Heart left ventricle (tissue), 16 donors: ENCODE measurements at regions of chr1 and their contacts with region 1.

Region 1: GRCh38 chr1:180033390-180033789 is 78.8 kb downstream of the CEP350 start:
- DNase-seq: no peak
- ATAC-seq: no peak
- H3K4me3 ChIP-seq: no peak overlapping the region
- H3K27ac ChIP-seq: no peak overlapping the region
- H3K4me1 ChIP-seq: no peaks in the 10 kb centered on the region
- H3K27me3 ChIP-seq: no peaks in the 10 kb centered on the region
- CTCF ChIP-seq: no peak
- POLR2A ChIP-seq: no peak

Region 2: DNA sequence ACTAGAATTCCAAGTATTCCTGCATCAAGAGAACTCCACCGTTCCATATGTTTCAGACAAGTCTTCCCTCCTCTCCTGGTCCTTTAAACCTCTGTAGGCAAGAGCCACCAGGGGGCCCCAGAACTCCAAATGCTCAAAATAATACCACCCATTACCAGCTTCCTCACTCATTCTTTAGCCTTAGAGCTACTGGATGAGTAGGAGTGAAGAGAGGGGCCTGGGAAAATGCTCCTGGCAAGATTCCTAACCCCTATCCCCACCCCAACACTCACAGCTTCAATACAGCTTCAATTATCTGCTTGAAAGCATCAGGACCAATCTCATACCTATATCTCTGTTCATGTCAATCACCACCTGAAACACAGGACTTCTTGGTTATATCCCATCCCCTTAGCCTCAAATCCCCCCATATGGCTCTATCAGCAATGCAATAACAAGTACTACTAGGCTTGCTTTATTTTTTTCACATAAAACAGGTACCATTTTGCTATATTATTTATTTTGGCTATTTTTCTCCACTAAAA is 165.5 kb before region 1 on chr1:
- intact Hi-C with region 1: loop called in 1 of 10 experiments (anchors 10 kb)
- DNase-seq: peak in 1 of 5 donors; percentile 47
- ATAC-seq: peak in 3 of 4 donors; percentile 45 to 63 (median 55)
- H3K4me3 ChIP-seq: no peak overlapping the region
- H3K27ac ChIP-seq: no peak overlapping the region
- H3K4me1 ChIP-seq: peaks cover 0 to 38% (median 22%) of the 10 kb centered on the region in 12 donors
- H3K27me3 ChIP-seq: no peaks in the 10 kb centered on the region
- CTCF ChIP-seq: peak; percentile 42 to 73 (median 63)
- POLR2A ChIP-seq: no peak

Region 3: GRCh38 chr1:179973198-179974110 is 59.9 kb before region 1 on chr1:
- intact Hi-C with region 1: no loop called
- DNase-seq: no peak
- ATAC-seq: no peak
- H3K4me3 ChIP-seq: no peak overlapping the region
- H3K27ac ChIP-seq: no peak overlapping the region
- H3K4me1 ChIP-seq: peaks cover 4 to 78% (median 51%) of the 10 kb centered on the region in 12 donors
- H3K27me3 ChIP-seq: no peaks in the 10 kb centered on the region
- CTCF ChIP-seq: no peak
- POLR2A ChIP-seq: no peak

Region 4: DNA sequence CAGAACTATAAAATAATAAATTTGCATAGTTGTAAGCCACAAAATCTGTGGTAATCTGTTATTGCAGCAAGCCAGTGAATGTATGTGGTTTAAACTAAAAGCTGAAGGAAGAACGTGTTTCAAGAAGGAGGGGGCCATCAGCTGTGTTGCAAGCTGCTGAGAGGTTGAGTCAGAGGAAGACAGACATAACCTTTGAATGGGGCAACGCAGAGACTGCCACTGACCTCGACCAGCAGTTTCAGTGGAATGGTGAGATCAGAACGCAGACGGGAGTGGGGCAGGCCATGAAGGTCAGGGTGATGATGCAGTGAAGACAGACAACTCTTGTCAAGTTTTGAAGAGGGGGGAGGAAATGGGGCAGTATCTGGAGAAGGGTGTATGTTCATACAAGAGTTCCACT is 98.1 kb after region 1 on chr1:
- intact Hi-C with region 1: no loop called
- DNase-seq: no peak
- ATAC-seq: peak in 1 of 4 donors; percentile 68
- H3K4me3 ChIP-seq: no peak overlapping the region
- H3K27ac ChIP-seq: no peak overlapping the region
- H3K4me1 ChIP-seq: no peaks in the 10 kb centered on the region
- H3K27me3 ChIP-seq: no peaks in the 10 kb centered on the region
- CTCF ChIP-seq: no peak
- POLR2A ChIP-seq: no peak

Region 5: DNA sequence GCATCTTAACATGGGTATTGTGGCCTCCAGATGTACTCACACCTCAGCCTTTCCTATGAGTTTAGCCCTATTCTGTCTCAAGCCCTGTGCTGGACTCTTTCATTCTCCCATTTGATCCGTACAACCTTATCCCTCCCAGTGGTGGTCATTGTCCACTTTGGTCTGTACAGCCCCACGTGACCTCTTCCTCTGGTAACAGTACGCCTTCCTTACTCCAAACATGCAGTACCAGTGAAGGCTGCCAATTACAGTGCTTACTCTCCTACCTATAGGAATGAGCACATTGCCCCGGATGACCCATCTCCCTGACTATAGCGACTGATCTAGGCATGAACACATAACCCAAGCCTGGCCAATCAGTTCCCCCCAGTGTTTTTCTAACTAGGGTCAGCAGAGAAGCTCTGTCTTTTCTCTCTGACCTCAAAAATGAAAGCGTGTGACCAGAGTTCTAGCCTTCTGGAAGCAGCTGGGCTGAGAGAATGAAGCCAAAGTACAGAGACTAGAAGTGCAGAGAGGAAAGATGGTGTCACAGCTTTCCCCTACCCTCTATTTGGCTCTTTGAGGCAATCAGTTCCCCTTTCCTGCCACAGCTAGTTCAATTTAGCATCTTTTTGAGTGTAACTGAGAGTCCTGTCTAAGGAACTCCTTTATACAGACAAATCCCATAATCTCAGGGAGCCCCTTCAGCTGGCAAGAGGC is 111.4 kb after region 1 on chr1:
- intact Hi-C with region 1: no loop called
- DNase-seq: no peak
- ATAC-seq: no peak
- H3K4me3 ChIP-seq: no peak overlapping the region
- H3K27ac ChIP-seq: peak overlapping the region in 2 of 12 donors; percentile 13 to 23
- H3K4me1 ChIP-seq: no peaks in the 10 kb centered on the region
- H3K27me3 ChIP-seq: no peaks in the 10 kb centered on the region
- CTCF ChIP-seq: no peak
- POLR2A ChIP-seq: no peak